ENCODE measurements at regions of chr3 and their contacts with region 1.

Region 1: GRCh38 chr3:61666613-61667330 is 105.4 kb downstream of the PTPRG start:
- DNase-seq: no peak
- H3K4me3 ChIP-seq: no peak overlapping the region
- H3K27ac ChIP-seq: no peak overlapping the region
- H3K4me1 ChIP-seq: peaks cover 6% of the 10 kb centered on the region
- H3K27me3 ChIP-seq: no peaks in the 10 kb centered on the region
- CTCF ChIP-seq: no peak
- EP300 ChIP-seq: no peak
- POLR2A ChIP-seq: no peak

Region 2: DNA sequence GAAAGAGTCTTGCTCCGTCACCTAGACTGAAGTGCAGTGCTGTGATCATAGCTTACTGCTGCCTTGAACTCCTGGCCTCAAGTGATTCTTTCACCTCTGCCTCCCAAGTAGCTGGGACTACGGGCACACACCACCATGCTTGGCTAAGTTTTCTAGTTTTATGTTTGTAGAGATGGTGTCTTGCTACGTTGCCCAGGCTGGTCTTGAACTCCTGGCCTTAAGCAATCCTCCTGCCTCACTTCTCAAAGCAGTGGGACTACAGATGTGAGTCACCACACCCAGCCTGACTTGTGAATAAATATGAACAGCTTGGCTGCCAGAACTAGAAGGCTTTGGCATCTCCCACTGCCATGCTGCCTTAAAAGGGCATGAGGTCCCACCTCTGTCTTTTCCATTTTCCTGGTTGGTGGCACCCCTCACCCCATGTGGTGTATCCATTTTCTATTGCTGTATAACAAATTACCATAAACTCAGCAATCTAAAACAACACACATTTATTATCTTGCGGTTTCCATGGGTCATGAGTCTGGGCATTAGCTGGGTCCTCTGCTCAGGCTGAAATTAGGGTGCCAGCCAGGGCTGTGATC is 61.1 kb before region 1 on chr3:
- intact Hi-C with region 1: loop called in 1 of 4 experiments (anchors 2 kb)
- DNase-seq: no peak
- H3K4me3 ChIP-seq: no peak overlapping the region
- H3K27ac ChIP-seq: no peak overlapping the region
- H3K4me1 ChIP-seq: no peaks in the 10 kb centered on the region
- H3K27me3 ChIP-seq: no peaks in the 10 kb centered on the region
- CTCF ChIP-seq: no peak
- EP300 ChIP-seq: no peak
- POLR2A ChIP-seq: no peak

Region 3: GRCh38 chr3:61768284-61769037 is 101.7 kb after region 1 on chr3:
- intact Hi-C with region 1: no loop called
- DNase-seq: no peak
- H3K4me3 ChIP-seq: no peak overlapping the region
- H3K27ac ChIP-seq: no peak overlapping the region
- H3K4me1 ChIP-seq: no peaks in the 10 kb centered on the region
- H3K27me3 ChIP-seq: no peaks in the 10 kb centered on the region
- CTCF ChIP-seq: no peak
- EP300 ChIP-seq: no peak
- POLR2A ChIP-seq: no peak